ENCODE measurements at regions of chr10 and their contacts with region 1.

Region 1: DNA sequence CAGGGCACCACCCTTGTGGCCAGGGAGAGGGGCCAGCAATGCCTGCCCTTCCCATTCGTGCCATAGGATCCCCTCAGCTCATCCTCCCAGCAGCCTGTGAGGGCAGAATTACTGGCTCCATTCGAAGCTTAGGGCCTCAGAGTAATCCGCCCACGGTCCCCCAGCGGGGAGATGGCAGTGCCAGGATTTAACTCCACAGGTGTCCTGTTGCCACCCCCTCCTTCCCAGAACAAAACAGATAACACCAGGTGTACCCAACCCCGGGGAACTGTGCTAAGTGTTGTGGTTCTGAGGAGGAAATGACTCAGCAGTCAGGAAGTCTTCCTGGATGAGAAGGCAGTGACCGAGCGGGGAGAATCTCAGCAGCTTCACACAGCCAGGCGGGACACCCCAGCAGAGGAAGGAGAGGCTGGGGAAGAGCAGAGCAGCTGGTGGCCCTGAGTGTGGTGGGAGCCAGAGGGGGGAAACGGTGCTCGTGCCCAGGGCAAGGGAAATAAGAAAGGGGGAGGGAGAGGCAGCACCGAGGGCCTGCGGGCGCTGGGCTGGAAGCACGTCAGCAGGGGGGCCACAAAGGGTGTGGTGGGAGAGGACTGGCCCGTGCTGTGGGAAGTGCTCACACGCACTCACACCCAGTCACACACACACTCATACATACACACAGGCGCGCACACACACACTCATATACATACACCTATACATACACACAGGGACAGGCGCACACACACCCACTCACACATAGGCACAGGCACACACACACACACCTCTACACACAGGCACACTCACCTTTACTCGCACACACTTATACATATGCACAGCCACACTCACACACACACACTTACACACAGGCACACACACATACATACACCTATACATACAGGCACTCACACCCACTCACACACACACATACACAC is 59.8 kb upstream of the CHST15 start:
- DNase-seq: peak; percentile 17 to 81
- H3K4me3 ChIP-seq: no peak overlapping the region
- H3K27ac ChIP-seq: peak overlapping the region; percentile 78 to 90
- H3K4me1 ChIP-seq: peaks cover 28 to 52% of the 10 kb centered on the region in 2 donors
- H3K27me3 ChIP-seq: no peaks in the 10 kb centered on the region
- CTCF ChIP-seq: no peak

Region 2: DNA sequence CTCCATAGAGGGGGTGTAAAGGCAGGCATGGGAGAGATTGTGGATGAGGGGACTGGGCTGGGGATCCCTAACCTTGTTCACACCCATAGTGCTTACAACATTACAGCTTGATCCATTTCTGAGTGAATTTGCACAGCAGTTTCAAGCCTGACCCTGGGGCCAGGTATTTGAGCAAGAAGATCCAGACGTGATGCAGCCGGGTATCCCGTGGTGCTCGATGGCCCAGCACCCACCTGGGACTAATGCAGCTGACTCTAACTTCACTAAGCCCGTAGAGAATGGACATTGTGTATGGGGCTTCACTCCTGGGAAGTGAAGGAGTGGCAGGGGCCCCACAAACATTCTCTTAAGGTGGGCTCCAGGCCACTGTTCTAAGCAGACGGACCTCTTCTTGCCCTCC is 454.4 kb before region 1 on chr10:
- intact Hi-C with region 1: no loop called
- DNase-seq: no peak
- H3K4me3 ChIP-seq: no peak overlapping the region
- H3K27ac ChIP-seq: no peak overlapping the region
- H3K4me1 ChIP-seq: no peaks in the 10 kb centered on the region
- H3K27me3 ChIP-seq: no peaks in the 10 kb centered on the region
- CTCF ChIP-seq: no peak

Region 3: DNA sequence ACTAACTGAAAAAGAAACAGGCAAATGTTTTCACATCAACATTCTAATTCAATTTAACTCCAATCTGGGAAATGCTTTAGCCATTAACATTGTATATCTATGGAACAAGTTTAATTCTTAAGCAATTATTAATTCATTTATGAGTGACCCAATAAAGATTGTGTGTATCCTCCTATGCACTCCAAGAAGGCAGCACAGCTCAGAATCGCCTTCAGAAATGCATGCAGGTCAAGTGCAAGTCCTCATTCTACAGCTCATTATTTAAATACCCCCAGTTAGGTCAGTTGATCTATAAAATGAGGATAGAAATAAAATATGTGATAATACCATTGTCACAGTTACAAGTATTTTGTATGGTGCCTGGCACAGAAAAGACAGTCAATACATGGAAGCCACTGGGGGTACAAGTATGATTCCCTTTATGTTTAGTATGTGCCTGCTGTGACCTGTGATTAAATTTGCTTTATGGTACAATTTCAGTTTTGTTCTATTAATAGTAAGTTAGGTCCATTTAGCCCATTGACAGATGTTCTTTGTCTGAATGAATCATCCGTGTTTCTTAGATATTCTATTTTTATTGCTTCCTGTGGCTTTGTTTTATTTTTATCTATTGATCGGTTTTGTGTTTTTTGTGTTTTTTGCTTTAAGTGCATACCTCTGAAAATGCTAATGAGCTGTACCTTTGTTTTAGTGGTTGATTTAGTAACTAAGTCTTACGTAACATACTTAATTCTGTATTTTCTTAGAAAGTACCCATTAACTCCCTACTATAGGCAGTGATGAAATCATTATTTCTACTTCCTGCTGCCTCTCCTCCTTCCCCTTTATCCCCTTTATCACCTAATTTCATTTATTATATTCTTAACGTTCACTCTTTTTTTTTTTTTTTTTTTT is 304.4 kb before region 1 on chr10:
- intact Hi-C with region 1: no loop called
- DNase-seq: no peak
- H3K4me3 ChIP-seq: no peak overlapping the region
- H3K27ac ChIP-seq: peak overlapping the region in 1 of 2 donors; percentile 27
- H3K4me1 ChIP-seq: peaks cover 4 to 35% of the 10 kb centered on the region in 2 donors
- H3K27me3 ChIP-seq: no peaks in the 10 kb centered on the region
- CTCF ChIP-seq: no peak

Region 4: DNA sequence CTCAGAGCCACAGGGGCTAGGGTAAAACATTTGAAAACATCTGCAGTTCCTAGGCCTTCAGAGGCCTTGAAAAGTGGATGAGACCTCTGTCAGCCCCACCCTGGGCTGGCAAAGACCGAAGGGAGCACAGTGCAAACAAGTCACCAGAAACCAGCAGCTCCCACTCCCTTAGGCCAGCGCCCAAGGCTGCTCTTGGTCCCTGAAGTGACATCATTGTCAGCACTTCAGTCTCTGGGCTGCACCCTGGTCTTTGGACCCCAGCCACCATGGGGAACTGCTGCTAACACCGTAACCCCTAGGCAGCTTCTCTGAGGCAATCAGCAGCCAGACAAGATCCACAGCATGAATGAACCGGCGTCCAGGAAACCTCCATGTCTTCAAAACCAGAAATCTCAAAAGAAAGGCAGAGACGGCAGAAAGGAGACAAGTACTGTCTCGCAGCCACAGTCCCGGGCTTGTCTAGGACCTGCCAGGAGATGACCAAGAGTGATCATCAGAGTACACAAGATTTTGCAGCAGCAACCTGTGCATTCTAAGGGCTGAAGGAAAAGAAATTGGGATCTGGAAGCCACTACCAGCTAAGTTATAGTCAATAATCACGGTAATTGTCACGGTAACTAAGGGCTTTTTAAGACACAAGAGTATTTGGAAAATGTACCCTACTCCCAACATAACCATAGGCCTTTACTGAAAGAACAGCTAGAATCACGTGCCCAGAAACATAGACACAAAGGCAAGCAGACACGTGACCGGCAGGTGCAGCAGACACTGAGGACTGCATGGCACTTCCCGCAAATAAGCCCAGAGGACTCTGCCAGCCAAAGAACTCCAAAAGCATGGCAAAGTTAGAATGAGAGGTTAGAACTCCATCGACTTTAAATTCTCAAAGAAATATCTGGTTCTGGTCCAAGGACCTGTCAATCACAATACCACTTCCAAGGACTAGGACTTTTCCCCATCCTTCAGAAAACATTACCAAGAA is 284.8 kb before region 1 on chr10:
- intact Hi-C with region 1: loop called (anchors 10 kb)
- DNase-seq: peak in 1 of 2 donors; percentile 63
- H3K4me3 ChIP-seq: no peak overlapping the region
- H3K27ac ChIP-seq: peak overlapping the region; percentile 40 to 65
- H3K4me1 ChIP-seq: peaks cover 31 to 40% of the 10 kb centered on the region in 2 donors
- H3K27me3 ChIP-seq: no peaks in the 10 kb centered on the region
- CTCF ChIP-seq: no peak

Region 5: DNA sequence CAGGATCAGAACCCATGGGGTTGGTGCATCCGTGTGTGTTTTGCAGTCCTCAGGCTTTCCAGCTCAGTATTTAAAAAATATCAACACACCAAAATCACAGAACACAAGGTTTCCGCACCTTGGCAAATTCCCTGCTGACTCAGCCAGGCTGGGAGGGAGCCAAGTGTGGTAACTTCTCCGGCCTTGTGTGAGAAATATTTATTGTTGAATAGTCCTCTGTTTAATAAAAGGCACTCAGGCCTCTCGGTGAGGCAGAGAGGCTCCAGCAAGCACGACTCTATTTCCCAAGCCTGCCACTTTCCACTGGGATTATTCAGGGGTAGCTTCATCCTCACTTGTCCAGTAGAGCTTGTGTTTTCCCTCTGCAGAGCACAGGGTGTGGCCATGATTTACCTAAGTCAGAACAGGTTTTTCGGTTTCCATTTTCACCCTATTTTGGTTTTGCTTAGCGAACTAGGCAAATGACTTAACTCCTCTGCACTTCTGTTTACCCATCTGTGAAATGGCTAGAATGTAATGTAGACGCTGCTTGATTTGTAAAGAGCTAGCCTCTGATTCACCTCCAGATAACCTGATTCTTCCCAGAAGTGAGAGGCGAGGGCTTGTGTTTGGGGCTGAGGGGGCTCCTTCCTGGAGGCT is 46.8 kb before region 1 on chr10:
- intact Hi-C with region 1: loop called (anchors 5 kb)
- DNase-seq: peak in 1 of 2 donors; percentile 88
- H3K4me3 ChIP-seq: no peak overlapping the region
- H3K27ac ChIP-seq: peak overlapping the region; percentile 54 to 58
- H3K4me1 ChIP-seq: peaks cover 4 to 10% of the 10 kb centered on the region in 2 donors
- H3K27me3 ChIP-seq: no peaks in the 10 kb centered on the region
- CTCF ChIP-seq: no peak

Region 6: GRCh38 chr10:124138195-124138882 is 14.8 kb before region 1 on chr10:
- intact Hi-C with region 1: no loop called
- DNase-seq: peak in 1 of 2 donors; percentile 82
- H3K4me3 ChIP-seq: no peak overlapping the region
- H3K27ac ChIP-seq: peak overlapping the region; percentile 54 to 74
- H3K4me1 ChIP-seq: peaks cover 0 to 17% of the 10 kb centered on the region in 2 donors
- H3K27me3 ChIP-seq: no peaks in the 10 kb centered on the region
- CTCF ChIP-seq: no peak

Region 7: GRCh38 chr10:124328477-124329220 is 175.5 kb after region 1 on chr10:
- intact Hi-C with region 1: loop called (anchors 5 kb)
- DNase-seq: peak; percentile 75 to 87
- H3K4me3 ChIP-seq: no peak overlapping the region
- H3K27ac ChIP-seq: peak overlapping the region; percentile 90
- H3K4me1 ChIP-seq: peaks cover 7 to 30% of the 10 kb centered on the region in 2 donors
- H3K27me3 ChIP-seq: no peaks in the 10 kb centered on the region
- CTCF ChIP-seq: no peak

Region 8: GRCh38 chr10:124911124-124912067 is 758.2 kb after region 1 on chr10:
- intact Hi-C with region 1: loop called (anchors 10 kb)
- DNase-seq: no peak
- H3K4me3 ChIP-seq: peak overlapping the region in 1 of 2 donors; percentile 30
- H3K27ac ChIP-seq: peak overlapping the region; percentile 86 to 87
- H3K4me1 ChIP-seq: peaks cover 3 to 26% of the 10 kb centered on the region in 2 donors
- H3K27me3 ChIP-seq: no peaks in the 10 kb centered on the region
- CTCF ChIP-seq: no peak